ENCODE measurements at regions of chr4 and their contacts with region 1.

Region 1: DNA sequence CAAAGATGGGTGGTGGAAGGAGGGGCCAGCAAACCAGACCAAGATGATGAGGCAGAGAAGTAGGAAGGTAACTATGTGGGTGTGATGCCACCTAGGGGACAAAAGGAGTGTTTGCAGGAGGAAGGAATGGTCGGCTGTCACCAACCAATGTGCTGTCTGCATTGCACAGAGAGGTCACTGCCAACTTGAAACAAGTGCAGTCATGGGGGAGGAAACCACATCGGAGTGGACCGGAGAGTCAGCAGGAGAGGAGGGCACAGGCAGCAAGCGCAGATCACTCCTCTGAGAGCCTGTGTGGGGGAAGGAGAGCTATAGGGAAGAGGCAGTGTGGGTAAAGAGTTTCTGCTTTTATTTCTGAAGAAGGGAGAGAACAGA is 38.5 kb upstream of the FGFBP2 start:
- DNase-seq: peak in 3 of 5 donors; percentile 41 to 60 (median 57)
- H3K4me3 ChIP-seq: no peak overlapping the region
- H3K4me3 Mint-ChIP-seq: no peak overlapping the region
- H3K27ac ChIP-seq: no peak overlapping the region
- H3K27ac Mint-ChIP-seq: no peak overlapping the region
- H3K4me1 ChIP-seq: no peaks in the 10 kb centered on the region
- H3K4me1 Mint-ChIP-seq: no peaks in the 10 kb centered on the region
- H3K27me3 ChIP-seq: peaks cover 6% of the 10 kb centered on the region
- H3K27me3 Mint-ChIP-seq: peaks cover 7 to 10% of the 10 kb centered on the region in 2 donors

Region 2: GRCh38 chr4:15963001-15963451 is 38.4 kb before region 1 on chr4 and contains the start of gene FGFBP2:
- CTCF ChIA-PET with region 1: interaction called, 13 read pairs
- POLR2A ChIA-PET with region 1: no interaction called
- DNase-seq: peak; percentile 21 to 80 (median 64)
- H3K4me3 ChIP-seq: peak within 1 kb of the TSS; percentile 26
- H3K4me3 Mint-ChIP-seq: peak within 1 kb of the TSS; percentile 71 to 90 (median 81)
- H3K27ac ChIP-seq: peak within 1 kb of the TSS; percentile 58
- H3K27ac Mint-ChIP-seq: peak within 1 kb of the TSS; percentile 78 to 95 (median 89)
- H3K4me1 ChIP-seq: peaks cover 20% of the 10 kb centered on the region
- H3K4me1 Mint-ChIP-seq: peaks cover 35 to 43% (median 35%) of the 10 kb centered on the region in 3 donors
- H3K27me3 ChIP-seq: no peaks in the 10 kb centered on the region
- H3K27me3 Mint-ChIP-seq: peaks cover 11 to 14% of the 10 kb centered on the region in 2 donors
- total RNA-seq, gene FGFBP2: 3.5 TPM

Measured in CD8-positive, alpha-beta memory T cell (primary cell).